ENCODE measurements at regions of chrX and their contacts with region 1.

Region 1: GRCh38 chrX:48648336-48648751 is 35.3 kb upstream of the WAS start:
- DNase-seq: peak; percentile 45
- ATAC-seq: peak; percentile 72
- H3K4me3 ChIP-seq: no peak overlapping the region
- H3K27ac ChIP-seq: no peak overlapping the region
- H3K4me1 ChIP-seq: no peaks in the 10 kb centered on the region
- H3K27me3 ChIP-seq: peaks cover 3% of the 10 kb centered on the region; the same call in 1 of the 2 replicates
- CTCF ChIP-seq: peak; percentile 42
- POLR2A ChIP-seq: no peak
- RAD21 ChIP-seq: peak; percentile 48

Region 2: GRCh38 chrX:48917139-48918001 is 269.0 kb after region 1 on chrX:
- CTCF ChIA-PET with region 1: no interaction called
- POLR2A ChIA-PET with region 1: no interaction called
- dilution Hi-C with region 1: no loop called
- in situ Hi-C with region 1: no loop called
- intact Hi-C with region 1: loop called (anchors 2 kb)
- DNase-seq: peak; percentile 85
- ATAC-seq: peak; percentile 70
- H3K4me3 ChIP-seq: no peak overlapping the region
- H3K27ac ChIP-seq: no peak overlapping the region
- H3K4me1 ChIP-seq: peaks cover 3% of the 10 kb centered on the region; the same call in 1 of the 2 replicates
- H3K27me3 ChIP-seq: no peaks in the 10 kb centered on the region
- CTCF ChIP-seq: peak; percentile 91
- POLR2A ChIP-seq: no peak
- RAD21 ChIP-seq: peak; percentile 46

Region 3: GRCh38 chrX:48945516-48946348 is 297.4 kb after region 1 on chrX:
- CTCF ChIA-PET with region 1: interaction called, 3 read pairs
- POLR2A ChIA-PET with region 1: no interaction called
- dilution Hi-C with region 1: no loop called
- in situ Hi-C with region 1: no loop called
- intact Hi-C with region 1: loop called (anchors 10 kb)
- DNase-seq: peak; percentile 51
- ATAC-seq: peak; percentile 93
- H3K4me3 ChIP-seq: no peak overlapping the region
- H3K27ac ChIP-seq: no peak overlapping the region
- H3K4me1 ChIP-seq: no peaks in the 10 kb centered on the region
- H3K27me3 ChIP-seq: no peaks in the 10 kb centered on the region
- CTCF ChIP-seq: peak; percentile 76
- POLR2A ChIP-seq: no peak
- RAD21 ChIP-seq: peak; percentile 65

Measured in IMR-90 (cell line).